Activated T-helper 1 cell treated with anti-CD3 and anti-CD28 coated beads, Interleukin-12 subunit alpha, Interleukin-12 subunit beta, Interleukin-2, Interleukin-4 antibody, amounts not matched to agents 30 ng/mL and 10 ng/mL and 1 ng/mL, durations not matched to agents 14 hours and 24 hours and 36 hours (primary cell): ENCODE measurements at regions of chr11 and their contacts with region 1.

Region 1: GRCh38 chr11:304915-305843 is 2.4 kb upstream of the IFITM2 start:
- DNase-seq: no peak
- H3K4me3 Mint-ChIP-seq: no peak overlapping the region
- H3K27ac Mint-ChIP-seq: no peak overlapping the region
- H3K4me1 Mint-ChIP-seq: peaks cover 43% of the 10 kb centered on the region
- H3K27me3 Mint-ChIP-seq: peaks cover 10% of the 10 kb centered on the region

Region 2: GRCh38 chr11:207208-207862 is 97.8 kb before region 1 on chr11 and contains the starts of genes BET1L and RIC8A:
- intact Hi-C with region 1: loop called (anchors 2 kb)
- DNase-seq: peak; percentile 97
- H3K4me3 Mint-ChIP-seq: peak within 1 kb of the TSS; percentile 89
- H3K27ac Mint-ChIP-seq: peak within 1 kb of the TSS; percentile 98
- H3K4me1 Mint-ChIP-seq: peaks cover 55% of the 10 kb centered on the region
- H3K27me3 Mint-ChIP-seq: no peaks in the 10 kb centered on the region
- total RNA-seq, gene BET1L: 42.0 and 48.7 TPM in 2 replicates
- total RNA-seq, gene RIC8A: 132 and 149 TPM in 2 replicates

Region 3: DNA sequence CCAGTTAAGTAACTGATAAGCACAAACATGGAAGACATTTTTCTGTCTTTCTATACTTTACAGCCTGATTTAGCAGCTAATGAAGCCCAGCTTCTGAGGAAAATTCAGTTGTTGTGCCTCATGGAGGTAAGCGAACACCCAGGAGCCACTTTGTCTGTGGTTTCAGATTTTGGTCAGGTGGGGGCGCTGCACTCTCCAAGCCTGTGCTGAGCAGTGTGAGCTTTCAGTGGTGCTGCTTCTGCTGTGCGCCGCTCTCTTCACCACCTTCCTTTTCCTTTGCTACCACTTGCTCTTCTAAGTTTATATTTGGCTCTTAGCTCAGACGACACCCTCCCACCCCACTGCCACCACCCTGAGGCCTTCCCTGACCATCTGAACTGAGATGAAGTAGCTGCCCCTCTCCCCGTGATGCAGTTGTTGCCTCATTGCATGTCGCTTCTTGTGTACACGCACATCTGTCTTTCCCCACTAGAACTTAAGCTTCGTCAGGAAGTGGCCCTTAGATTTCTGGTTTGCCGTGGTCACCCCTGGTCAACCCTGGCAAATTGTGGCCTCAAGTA is 54.4 kb before region 1 on chr11:
- intact Hi-C with region 1: loop called (anchors 2 kb)
- DNase-seq: peak; percentile 65
- H3K4me3 Mint-ChIP-seq: no peak overlapping the region
- H3K27ac Mint-ChIP-seq: peak overlapping the region; percentile 1
- H3K4me1 Mint-ChIP-seq: peaks cover 26% of the 10 kb centered on the region
- H3K27me3 Mint-ChIP-seq: no peaks in the 10 kb centered on the region

Region 4: DNA sequence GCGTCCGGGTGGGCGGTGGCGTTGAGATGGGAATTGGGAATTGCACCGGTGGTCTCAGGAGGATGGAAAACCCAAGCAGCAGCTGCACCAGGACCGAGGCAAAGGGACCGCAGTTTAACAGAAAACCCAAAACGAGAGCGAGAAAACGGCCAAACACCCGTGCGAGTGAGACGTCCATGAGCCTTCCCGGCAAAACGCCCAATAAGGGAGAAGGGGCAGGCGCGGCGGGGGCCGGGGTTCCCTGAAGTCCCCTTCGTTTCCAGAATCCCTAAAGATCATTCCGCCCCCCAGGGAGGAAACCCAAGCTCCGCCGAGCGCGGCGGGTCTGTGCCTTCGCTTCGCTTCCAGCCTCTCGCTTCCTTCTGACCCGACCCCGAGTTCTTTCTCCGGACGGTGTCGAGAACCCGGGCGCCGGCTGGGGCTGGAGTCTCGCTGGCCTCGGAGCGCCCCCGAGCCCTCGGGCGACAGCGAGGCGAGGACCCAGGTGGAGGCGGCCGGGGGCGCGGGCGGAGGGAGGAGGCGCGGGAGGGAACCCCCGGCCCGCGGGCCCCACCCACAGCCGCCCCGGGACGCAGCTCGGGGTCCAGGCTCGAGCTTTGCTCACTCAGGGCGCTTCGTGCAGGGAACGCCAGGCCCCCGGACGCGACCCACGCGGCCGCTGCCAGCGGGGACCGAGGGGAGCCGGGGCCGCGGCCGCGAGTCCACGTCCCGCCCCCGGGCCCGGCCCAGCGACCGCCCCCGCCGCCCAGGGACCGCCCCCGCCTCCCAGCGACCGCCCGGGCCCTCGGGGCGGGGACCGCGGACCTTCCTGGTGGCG is 16.6 kb before region 1 on chr11 and contains the start of gene PGGHG:
- intact Hi-C with region 1: loop called (anchors 2 kb)
- DNase-seq: peak; percentile 68
- H3K4me3 Mint-ChIP-seq: peak within 1 kb of the TSS; percentile 95
- H3K27ac Mint-ChIP-seq: peak within 1 kb of the TSS; percentile 98
- H3K4me1 Mint-ChIP-seq: peaks cover 37% of the 10 kb centered on the region
- H3K27me3 Mint-ChIP-seq: peaks cover 6% of the 10 kb centered on the region
- total RNA-seq, gene PGGHG: 164 and 167 TPM in 2 replicates

Region 5: DNA sequence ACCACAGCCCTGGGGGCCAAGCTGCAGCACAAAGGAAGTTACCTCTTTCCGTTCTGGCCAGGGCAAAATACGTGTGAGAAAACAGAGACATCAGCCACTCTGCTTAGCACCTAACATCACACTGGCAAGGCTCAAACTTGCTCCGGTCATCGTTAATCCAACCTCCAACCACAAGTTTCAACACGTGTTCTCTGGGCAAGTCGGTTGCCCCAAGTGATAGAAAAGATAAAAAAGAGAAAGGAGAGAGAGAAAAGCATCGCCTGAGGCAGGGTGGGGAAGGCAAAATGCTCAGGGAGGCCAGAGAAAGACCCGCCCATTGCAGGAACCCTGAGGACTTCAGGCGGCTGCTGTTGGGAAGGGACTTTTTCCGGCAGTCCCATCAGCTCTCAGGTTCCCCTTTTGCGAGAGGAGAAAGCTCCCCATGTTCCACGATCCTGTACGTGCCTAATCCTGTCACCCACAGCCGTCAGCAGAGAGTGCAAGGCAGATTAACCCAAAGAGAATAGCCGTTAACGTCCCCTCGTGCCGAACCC is 45.6 kb after region 1 on chr11:
- intact Hi-C with region 1: no loop called
- DNase-seq: no peak
- H3K4me3 Mint-ChIP-seq: no peak overlapping the region
- H3K27ac Mint-ChIP-seq: no peak overlapping the region
- H3K4me1 Mint-ChIP-seq: peaks cover 36% of the 10 kb centered on the region
- H3K27me3 Mint-ChIP-seq: peaks cover 17% of the 10 kb centered on the region

Region 6: GRCh38 chr11:396948-397548 is 91.9 kb after region 1 on chr11:
- intact Hi-C with region 1: loop called (anchors 2 kb)
- DNase-seq: no peak
- H3K4me3 Mint-ChIP-seq: no peak overlapping the region
- H3K27ac Mint-ChIP-seq: no peak overlapping the region
- H3K4me1 Mint-ChIP-seq: no peaks in the 10 kb centered on the region
- H3K27me3 Mint-ChIP-seq: peaks cover 8% of the 10 kb centered on the region

Region 7: DNA sequence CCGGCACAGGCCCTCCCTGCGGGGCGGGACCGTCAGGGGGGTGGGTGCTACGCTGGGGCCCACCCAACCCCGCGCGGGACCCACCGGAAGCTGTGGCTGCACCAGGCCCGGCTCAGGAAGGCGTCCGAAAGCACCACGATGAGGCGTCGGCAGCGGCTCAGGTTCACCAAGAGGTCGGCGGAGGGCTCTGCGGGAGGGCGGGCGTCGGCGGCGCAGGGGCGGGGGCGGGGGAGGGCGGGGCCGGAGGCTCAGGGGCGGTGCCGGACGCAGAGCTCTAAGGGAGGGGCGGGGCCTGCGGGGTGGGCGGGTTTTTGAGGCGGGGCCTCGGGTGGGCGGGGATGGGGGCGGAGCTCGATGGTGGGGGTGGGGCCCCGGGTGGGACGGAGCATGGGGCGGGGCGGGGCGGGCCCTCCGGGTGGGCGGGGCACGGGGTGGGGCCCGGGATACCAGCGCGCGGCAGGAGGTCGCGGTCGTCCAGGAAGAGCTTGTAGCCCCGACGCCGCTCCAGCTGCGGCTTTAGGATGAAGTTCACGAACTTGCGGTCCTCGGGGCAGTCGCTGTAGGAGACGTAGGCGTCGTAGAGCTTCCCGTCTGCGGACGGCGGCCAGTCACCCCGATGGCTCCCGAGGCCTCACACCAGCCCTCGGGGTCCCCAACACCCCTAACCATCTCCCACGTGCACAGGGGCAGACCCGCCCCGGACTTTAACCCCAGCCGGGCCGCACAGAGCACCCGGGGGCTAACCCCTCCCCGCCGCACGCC is 102.0 kb after region 1 on chr11:
- intact Hi-C with region 1: no loop called
- DNase-seq: peak; percentile 84
- H3K4me3 Mint-ChIP-seq: no peak overlapping the region
- H3K27ac Mint-ChIP-seq: peak overlapping the region; percentile 23
- H3K4me1 Mint-ChIP-seq: no peaks in the 10 kb centered on the region
- H3K27me3 Mint-ChIP-seq: peaks cover 2% of the 10 kb centered on the region

Region 8: GRCh38 chr11:447923-448731 is 142.9 kb after region 1 on chr11:
- intact Hi-C with region 1: loop called (anchors 5 kb)
- DNase-seq: peak; percentile 92
- H3K4me3 Mint-ChIP-seq: peak overlapping the region; percentile 88
- H3K27ac Mint-ChIP-seq: peak overlapping the region; percentile 91
- H3K4me1 Mint-ChIP-seq: peaks cover 16% of the 10 kb centered on the region
- H3K27me3 Mint-ChIP-seq: no peaks in the 10 kb centered on the region

Region 9: GRCh38 chr11:518463-519250 is 213.5 kb after region 1 on chr11:
- intact Hi-C with region 1: loop called (anchors 5 kb)
- DNase-seq: peak; percentile 81
- H3K4me3 Mint-ChIP-seq: peak overlapping the region; percentile 75
- H3K27ac Mint-ChIP-seq: peak overlapping the region; percentile 47
- H3K4me1 Mint-ChIP-seq: peaks cover 5% of the 10 kb centered on the region
- H3K27me3 Mint-ChIP-seq: no peaks in the 10 kb centered on the region